GM10248 (cell line): ENCODE measurements at regions of chr9 and their contacts with region 1.

Region 1: GRCh38 chr9:114906908-114907571 is 23.4 kb downstream of the TNFSF8 start:
- DNase-seq: no peak
- CTCF ChIP-seq: peak; percentile 43

Region 2: DNA sequence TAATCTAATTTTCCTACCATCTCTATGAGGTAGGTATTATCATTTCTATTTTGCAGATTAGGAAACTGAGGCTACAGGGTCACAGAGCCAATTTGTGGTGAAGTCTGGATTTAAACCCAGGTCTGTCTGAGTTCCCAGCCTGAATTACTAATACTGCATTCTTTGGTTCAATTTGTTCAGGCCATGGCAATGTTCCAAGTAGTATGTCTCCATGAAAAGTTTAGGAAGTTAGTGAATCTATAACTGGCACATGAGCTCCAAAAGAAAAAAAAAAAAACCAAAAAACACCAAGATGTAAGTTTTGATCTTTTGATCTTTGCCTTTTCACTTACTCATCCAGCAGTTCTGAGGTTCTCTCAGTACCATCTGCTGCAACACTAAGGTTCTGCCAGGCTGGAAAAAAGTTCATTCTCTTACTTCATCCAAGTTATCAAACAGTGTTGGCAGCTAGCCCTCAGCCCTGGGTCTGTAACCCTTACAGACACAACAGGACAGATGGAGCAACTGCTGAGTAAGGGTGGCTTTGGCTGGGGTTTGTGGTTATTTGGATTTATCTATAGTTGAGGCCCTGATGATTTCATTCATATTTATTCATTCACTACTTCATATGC is 300.3 kb before region 1 on chr9:
- CTCF ChIA-PET with region 1: no interaction called
- POLR2A ChIA-PET with region 1: no interaction called
- DNase-seq: no peak
- CTCF ChIP-seq: no peak

Region 3: GRCh38 chr9:114919611-114920010 is 12.6 kb after region 1 on chr9:
- CTCF ChIA-PET with region 1: interaction called, 40 read pairs
- POLR2A ChIA-PET with region 1: no interaction called
- DNase-seq: no peak
- CTCF ChIP-seq: no peak

Region 4: DNA sequence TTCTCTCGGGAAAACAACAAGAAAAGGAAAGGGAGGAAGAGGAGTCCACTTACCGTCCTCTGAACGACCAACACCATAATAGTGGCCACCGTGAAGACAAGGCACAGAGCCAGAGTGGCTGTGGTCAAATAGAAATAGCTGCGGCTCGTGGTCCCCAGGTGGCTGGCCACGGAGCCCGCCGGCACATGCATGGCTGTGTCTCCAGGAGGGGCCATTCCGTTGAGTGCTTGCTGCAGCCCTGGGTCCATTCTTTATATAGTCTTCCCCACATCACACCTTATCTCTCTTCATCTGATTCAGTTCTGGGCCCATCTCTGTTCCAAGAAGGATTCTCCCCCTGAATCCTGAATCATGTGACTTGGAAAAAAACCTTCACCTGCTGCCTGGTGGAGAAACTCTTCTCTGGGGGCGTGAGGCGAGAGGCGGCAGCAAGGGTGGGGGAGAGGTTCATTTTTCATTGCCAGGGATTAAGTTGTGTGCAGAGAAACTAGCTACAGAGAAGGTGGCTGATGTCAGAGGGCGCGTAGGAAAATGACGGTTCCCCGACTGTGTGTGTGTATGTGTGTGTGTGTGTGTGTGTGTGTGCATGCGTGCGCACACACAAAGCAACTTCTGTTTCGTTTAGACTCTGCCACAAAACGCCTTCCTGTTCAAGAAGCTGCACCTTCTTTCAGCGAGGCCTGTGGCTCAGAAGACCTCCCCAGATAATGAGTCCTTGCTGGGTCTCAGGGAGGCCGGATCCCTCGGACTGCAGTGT is 23.2 kb after region 1 on chr9 and contains the start of gene TNFSF8:
- CTCF ChIA-PET with region 1: interaction called, 40 read pairs
- POLR2A ChIA-PET with region 1: no interaction called
- DNase-seq: peak; percentile 27
- CTCF ChIP-seq: no peak

Region 5: DNA sequence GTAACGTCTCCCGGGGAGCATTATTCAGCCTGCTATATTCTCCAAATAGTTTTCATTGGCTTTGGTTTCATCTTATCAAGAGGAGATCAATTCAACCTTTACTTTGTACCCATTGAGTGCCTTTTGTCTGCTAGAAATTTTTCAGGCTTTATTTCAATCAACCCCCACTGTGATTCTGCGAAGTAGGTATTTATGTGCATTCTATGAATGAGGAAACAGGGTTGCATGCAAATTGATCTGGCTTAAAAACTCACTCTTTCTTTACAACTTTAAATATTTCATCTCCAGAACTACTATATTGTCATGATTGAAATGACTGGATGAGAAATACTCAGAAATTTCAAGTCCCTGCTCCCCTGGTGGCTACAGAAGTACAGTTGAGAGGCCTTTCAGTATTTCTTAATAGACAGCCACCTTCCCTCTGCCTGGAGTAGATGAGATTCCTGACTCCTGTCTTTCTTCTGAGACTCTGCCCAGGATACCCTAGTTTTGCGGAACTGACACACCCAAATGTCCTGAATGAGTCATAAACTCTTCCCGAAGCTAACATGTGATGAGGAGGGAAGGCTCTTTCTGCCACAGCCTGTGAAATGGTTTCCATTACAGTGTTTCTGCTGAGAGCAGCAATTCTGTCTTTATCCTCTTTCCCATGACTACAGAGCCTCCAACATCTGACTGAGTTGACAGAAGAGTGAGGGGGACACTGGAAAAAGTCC is 263.5 kb after region 1 on chr9:
- CTCF ChIA-PET with region 1: no interaction called
- POLR2A ChIA-PET with region 1: no interaction called
- DNase-seq: no peak
- CTCF ChIP-seq: no peak